ENCODE measurements at regions of chr11 and their contacts with region 1.

Region 1: GRCh38 chr11:120089036-120090001 is 48.6 kb downstream of the TRIM29 start:
- DNase-seq: peak in 9 of 10 donors; percentile 39 to 87 (median 70)
- H3K4me3 ChIP-seq: peak overlapping the region in 18 of 59 donors; percentile 1 to 36 (median 24)
- H3K27ac ChIP-seq: peak overlapping the region; percentile 88 to 100 (median 98)
- H3K27me3 ChIP-seq: no peaks in the 10 kb centered on the region
- CTCF ChIP-seq: no peak

Region 2: GRCh38 chr11:119759324-119759723 is 330.0 kb before region 1 on chr11:
- intact Hi-C with region 1: no loop called
- DNase-seq: peak in 1 of 10 donors; percentile 8
- H3K4me3 ChIP-seq: no peak overlapping the region
- H3K27ac ChIP-seq: no peak overlapping the region
- H3K27me3 ChIP-seq: peaks cover 0 to 3% (median 0%) of the 10 kb centered on the region in 45 donors
- CTCF ChIP-seq: no peak

Region 3: DNA sequence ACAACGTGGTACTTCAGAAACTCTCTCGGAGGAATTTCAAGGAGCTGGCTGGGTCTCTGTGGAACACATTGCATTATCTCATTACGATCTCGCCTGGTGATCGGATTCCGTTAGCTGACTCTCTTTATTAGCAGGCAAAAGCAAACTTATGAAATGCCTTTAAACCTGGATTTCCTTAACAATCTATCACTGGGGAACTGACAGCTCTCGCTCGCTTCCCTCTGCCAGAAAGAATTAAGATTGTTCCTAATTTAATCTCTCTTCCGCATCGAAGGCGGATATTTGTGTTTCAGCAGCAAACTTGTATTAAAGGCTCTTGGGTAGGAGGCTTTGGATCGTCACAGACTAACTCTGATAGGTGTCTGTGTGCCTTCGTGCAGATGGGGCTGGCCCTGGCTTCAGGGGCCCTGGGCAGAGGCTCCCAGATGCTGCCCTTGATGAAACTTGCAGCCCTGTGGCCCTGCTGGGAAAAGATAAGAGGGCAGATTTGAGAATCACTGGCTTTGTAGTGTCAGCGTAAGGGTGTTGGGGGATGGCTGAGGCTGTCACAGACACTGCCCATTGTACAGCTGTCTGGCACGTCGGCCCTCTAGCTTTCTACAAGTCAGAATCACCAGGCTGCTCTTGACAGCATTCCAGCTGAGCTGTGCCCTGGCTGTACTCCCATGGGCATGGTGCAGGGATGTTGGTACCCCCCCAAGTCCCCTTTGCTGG is 198.1 kb before region 1 on chr11:
- intact Hi-C with region 1: loop called in 1 of 2 experiments (anchors 1 kb)
- DNase-seq: peak in 9 of 10 donors; percentile 67 to 94 (median 87)
- H3K4me3 ChIP-seq: peak overlapping the region in 5 of 59 donors; percentile 18 to 36 (median 22)
- H3K27ac ChIP-seq: peak overlapping the region in 58 of 59 donors; percentile 51 to 99 (median 94)
- H3K27me3 ChIP-seq: peaks cover 0 to 7% (median 0%) of the 10 kb centered on the region in 45 donors
- CTCF ChIP-seq: peak in 15 of 56 donors; percentile 8 to 41 (median 23)

Region 4: DNA sequence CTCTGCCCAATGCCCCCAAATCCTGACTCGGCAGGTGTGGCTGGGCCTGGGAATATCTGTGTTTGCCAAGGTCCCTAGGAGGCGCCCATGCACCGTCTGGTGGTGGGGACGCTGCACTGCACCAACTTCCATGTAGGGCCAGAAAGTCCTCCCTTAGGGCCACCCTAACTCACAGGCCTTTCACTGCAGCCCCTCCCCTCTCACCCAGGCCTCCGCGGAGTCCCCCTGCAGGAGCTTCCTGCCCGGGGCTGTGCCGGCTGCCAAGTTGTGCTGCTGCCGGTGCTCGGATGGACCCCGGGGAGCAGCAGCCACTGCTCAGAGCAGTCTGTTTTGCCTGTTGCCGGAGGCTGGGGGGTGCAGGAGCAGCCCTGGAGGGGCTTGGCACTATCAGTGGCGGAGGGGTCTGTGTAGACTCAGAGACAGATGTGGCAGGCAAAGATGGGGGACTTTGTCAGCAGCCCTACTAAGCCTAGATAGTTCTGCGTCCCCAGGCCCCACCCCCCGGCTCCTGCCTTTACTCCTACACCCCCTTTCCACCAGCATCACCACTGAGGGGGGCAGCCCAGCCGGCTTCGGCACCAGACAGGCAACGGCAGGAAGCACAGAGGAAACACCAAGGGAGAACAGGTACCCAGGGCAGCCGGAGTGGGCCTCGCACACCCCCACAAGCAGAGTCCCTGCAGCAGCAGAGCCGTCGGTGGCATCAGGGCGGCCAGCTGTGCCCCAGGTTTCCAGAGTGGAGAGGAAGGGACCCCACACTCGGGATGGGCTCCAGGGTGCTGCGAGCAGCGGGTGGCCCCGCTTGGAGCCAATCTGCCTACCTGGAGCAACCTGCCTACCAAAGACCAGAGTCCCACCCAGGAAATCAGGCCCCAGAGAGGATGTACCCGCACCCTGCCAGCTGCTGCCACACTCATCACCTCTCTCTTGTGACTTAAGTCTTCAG is 75.7 kb before region 1 on chr11:
- intact Hi-C with region 1: loop called in 1 of 2 experiments (anchors 5 kb)
- DNase-seq: peak; percentile 55 to 80 (median 74)
- H3K4me3 ChIP-seq: peak overlapping the region in 3 of 59 donors; percentile 11 to 23 (median 23)
- H3K27ac ChIP-seq: peak overlapping the region in 55 of 59 donors; percentile 4 to 92 (median 80)
- H3K27me3 ChIP-seq: peaks cover 0 to 22% (median 0%) of the 10 kb centered on the region in 45 donors
- CTCF ChIP-seq: peak; percentile 31 to 90 (median 76)

Region 5: DNA sequence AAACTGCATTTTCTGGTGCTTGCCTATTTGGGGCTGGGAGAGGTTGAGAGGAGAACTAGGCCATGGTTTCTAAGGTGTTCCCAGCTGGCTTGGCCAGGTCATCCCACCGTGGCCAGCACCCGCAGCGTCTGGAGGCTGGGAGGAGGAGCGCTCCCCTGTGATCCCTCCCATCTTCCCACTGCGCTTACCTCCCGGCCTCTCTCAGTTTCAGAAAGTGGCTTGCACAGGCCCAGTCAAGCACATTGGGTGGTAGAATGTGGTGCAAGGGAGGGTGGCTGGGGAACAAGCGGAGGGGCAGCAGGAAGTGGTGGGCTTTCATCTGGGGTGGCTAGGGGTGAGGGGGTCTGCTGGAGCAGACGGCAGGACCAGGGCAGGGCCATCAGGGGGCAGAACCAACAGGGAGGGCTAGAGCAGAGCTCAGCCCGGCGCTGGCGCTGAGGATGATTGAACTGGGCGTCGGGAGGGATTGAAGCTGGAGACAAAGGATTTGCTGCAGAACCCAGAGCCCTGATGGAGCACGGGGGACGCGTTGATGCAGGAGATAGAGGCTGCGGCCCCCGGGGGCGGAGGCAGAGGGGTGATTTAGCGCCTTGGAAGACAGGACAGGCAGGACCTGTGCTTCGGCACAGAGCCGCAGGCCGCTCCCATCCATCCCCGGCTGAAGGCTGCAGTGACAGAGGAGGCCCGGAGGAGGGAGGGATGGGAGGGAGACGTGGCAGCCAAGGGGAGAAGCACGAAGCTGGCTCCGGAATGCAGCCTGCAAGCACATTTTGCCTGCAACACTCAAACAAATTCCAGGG is 27.4 kb before region 1 on chr11:
- intact Hi-C with region 1: no loop called
- DNase-seq: peak in 8 of 10 donors; percentile 31 to 74 (median 64)
- H3K4me3 ChIP-seq: peak overlapping the region in 2 of 59 donors; percentile 7 to 10
- H3K27ac ChIP-seq: peak overlapping the region in 40 of 59 donors; percentile 4 to 79 (median 58)
- H3K27me3 ChIP-seq: no peaks in the 10 kb centered on the region
- CTCF ChIP-seq: peak in 36 of 56 donors; percentile 9 to 47 (median 25)

Region 6: GRCh38 chr11:120285256-120285655 is 195.9 kb after region 1 on chr11:
- intact Hi-C with region 1: no loop called
- DNase-seq: no peak
- H3K4me3 ChIP-seq: no peak overlapping the region
- H3K27ac ChIP-seq: no peak overlapping the region
- H3K27me3 ChIP-seq: peaks cover 0 to 4% (median 0%) of the 10 kb centered on the region in 45 donors
- CTCF ChIP-seq: no peak